ENCODE measurements at regions of chrX and their contacts with region 1.

Region 1: GRCh38 chrX:68828740-68829552 is at the start of gene EFNB1:
- H3K4me3 ChIP-seq: peak within 1 kb of the TSS; percentile 58
- H3K27ac ChIP-seq: peak within 1 kb of the TSS; percentile 48; the same call in 1 of the 2 replicates
- H3K4me1 ChIP-seq: no peaks in the 10 kb centered on the region; the same call in 1 of the 2 replicates
- CTCF ChIP-seq: no peak

Region 2: DNA sequence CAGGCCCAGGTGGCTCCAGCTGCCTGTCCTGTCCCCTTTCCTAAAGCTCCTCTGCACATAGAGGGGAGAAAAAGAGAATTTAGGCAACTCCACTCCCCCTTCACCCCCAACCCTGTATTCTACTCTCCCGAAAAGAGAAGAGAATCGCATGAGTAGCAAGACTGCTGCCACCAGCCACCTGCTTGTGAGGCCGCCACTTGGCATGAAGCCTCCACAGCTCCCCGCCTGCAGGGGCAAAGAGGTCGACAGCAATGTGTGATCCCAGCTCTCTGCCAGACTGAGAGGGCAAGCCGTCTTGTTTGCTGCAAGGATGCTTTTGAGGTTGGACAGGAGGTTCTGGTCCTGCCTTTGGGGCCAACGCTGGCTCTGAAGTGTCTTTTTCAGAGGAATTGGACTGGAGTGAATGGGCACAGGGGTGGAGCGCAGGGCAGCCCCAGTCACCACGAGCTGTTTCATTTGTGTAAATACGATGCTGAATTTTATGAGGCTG is 104.4 kb before region 1 on chrX:
- CTCF ChIA-PET with region 1: no interaction called
- POLR2A ChIA-PET with region 1: no interaction called
- H3K4me3 ChIP-seq: no peak overlapping the region
- H3K27ac ChIP-seq: no peak overlapping the region
- H3K4me1 ChIP-seq: no peaks in the 10 kb centered on the region
- CTCF ChIP-seq: no peak

Region 3: GRCh38 chrX:68807818-68808217 is 21.1 kb before region 1 on chrX:
- CTCF ChIA-PET with region 1: interaction called, 14 read pairs
- POLR2A ChIA-PET with region 1: interaction called, 3 read pairs
- H3K4me3 ChIP-seq: no peak overlapping the region
- H3K27ac ChIP-seq: no peak overlapping the region
- H3K4me1 ChIP-seq: no peaks in the 10 kb centered on the region
- CTCF ChIP-seq: no peak

Region 4: DNA sequence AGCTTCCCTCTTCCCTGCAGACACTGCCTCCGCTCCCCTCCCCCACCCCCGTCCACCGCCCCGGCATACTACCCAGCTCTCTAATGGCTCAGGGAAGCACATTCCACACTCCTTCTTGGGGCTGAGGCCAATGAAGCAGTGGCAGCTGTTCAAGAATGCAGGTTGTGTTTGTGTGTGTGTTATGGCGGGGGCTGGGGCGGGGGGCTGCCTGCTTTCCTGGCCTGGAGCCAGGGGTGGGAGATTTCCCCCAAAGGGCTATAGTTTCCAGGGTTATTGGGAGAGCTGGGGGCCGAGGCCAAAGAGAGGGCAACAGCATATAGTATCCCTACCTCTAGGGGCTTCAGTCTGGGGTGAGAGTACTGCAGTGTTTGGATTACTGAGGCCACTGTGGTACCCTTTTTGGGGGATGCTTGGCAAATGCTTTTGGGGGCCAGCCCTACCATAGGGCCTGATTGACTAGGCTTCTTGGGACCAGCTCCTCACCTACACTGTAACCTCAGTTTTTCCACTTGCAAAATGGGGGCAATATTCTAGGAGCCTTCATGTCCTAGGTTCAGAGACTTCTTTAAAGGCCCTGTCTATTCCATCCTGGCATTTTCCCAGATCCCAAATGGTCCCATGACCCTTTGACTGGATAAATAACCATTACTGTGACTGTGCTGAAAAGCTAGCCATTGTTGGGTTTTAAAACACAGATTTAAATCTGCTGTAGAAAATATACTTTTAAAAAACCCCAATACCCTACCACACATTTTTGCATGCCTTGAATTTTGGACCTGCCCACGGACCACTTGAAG is 149.5 kb after region 1 on chrX:
- CTCF ChIA-PET with region 1: interaction called, 4 read pairs
- POLR2A ChIA-PET with region 1: interaction called, 14 read pairs
- H3K4me3 ChIP-seq: no peak overlapping the region
- H3K27ac ChIP-seq: no peak overlapping the region
- H3K4me1 ChIP-seq: no peaks in the 10 kb centered on the region
- CTCF ChIP-seq: no peak

Region 5: DNA sequence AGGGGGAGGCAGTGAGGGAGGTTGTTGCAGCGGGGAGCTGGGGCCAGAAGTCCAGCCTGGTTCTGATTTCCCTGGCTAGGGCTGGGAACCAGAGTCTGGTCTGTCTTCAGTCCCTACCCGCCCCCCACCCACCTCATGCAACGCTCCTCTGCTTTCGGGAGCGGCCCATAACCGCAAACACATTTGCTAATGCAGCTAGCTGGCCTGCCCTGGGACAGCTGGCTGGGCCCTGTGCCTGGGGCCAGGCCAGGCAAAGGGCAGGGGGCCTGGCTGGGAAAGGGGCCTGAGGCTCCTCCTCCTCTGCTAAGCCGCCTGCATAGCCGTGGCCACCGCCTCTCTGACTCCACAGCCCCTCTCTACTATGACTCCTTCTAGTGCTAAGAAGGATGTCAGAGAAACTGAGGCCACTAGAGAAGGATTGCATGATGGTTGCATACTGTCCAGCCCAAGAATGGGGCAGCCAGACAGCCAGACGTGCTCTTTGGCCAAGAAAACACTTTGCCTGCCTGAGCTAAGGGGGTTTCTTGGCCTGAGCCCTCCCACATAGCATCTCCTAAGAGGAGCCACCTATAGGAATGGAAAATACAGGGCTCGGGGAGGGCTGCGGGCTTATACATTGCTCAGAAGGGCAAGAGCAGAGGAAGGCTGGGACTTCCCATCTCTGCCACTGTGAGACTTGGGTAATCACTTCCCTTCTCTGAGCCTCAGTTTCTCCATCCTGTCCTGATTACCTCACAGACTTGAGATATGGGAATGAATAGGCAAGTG is 259.4 kb after region 1 on chrX:
- CTCF ChIA-PET with region 1: interaction called, 9 read pairs
- POLR2A ChIA-PET with region 1: interaction called, 19 read pairs
- H3K4me3 ChIP-seq: no peak overlapping the region
- H3K27ac ChIP-seq: no peak overlapping the region
- H3K4me1 ChIP-seq: no peaks in the 10 kb centered on the region
- CTCF ChIP-seq: no peak

Region 6: GRCh38 chrX:69165087-69165651 is 336.2 kb after region 1 on chrX and contains the start of gene PJA1:
- CTCF ChIA-PET with region 1: interaction called, 8 read pairs
- POLR2A ChIA-PET with region 1: interaction called, 20 read pairs
- H3K4me3 ChIP-seq: peak within 1 kb of the TSS; percentile 66
- H3K27ac ChIP-seq: peak within 1 kb of the TSS; percentile 62; the same call in 1 of the 2 replicates
- H3K4me1 ChIP-seq: no peaks in the 10 kb centered on the region
- CTCF ChIP-seq: no peak

Region 7: GRCh38 chrX:69387567-69388487 is 558.9 kb after region 1 on chrX:
- CTCF ChIA-PET with region 1: interaction called, 29 read pairs
- POLR2A ChIA-PET with region 1: interaction called, 5 read pairs
- H3K4me3 ChIP-seq: no peak overlapping the region
- H3K27ac ChIP-seq: no peak overlapping the region
- H3K4me1 ChIP-seq: no peaks in the 10 kb centered on the region
- CTCF ChIP-seq: peak; percentile 87